ENCODE measurements at regions of chr20 and their contacts with region 1.

Region 1: DNA sequence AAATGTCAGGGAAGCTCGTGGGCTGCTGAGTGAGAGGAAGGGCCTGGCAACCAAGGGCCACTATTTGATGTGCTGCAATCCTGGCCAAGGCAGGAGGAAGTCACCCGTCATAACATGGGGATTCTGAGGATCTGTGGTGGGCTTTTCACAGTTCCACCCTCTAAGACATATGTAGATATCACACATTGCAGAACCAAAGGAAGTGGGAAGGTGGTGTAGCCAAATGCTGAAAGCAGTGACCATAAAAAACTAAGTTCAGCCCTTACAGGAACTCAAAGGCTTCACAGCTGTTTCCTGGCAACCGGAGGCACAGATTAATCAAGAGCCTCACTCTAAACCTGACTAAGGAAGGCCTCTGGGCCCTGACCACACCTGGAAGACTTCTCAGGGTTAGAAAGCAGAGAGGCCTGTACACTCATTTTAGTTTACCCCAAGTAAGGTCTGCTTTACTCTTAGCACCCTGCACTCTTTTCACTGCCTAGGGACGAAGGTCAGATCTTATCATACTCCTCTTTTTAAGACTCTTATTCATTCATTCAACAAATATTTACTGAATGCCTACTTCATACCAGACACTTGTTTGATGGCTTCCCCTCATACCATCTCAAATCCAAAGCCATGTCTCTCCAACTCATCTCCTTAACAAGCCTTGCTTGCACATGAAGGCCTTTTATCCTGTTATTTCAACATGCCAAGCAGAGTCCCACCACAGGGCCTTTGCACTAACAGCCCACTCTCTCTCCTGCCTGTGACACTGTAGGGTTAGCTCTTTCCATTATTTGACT is 2.6 kb downstream of the UBE2V1 start:
- DNase-seq: no peak
- H3K4me3 ChIP-seq: no peak overlapping the region
- H3K27ac ChIP-seq: no peak overlapping the region
- H3K4me1 ChIP-seq: peaks cover 37% of the 10 kb centered on the region
- H3K27me3 ChIP-seq: no peaks in the 10 kb centered on the region
- CTCF ChIP-seq: no peak

Region 2: DNA sequence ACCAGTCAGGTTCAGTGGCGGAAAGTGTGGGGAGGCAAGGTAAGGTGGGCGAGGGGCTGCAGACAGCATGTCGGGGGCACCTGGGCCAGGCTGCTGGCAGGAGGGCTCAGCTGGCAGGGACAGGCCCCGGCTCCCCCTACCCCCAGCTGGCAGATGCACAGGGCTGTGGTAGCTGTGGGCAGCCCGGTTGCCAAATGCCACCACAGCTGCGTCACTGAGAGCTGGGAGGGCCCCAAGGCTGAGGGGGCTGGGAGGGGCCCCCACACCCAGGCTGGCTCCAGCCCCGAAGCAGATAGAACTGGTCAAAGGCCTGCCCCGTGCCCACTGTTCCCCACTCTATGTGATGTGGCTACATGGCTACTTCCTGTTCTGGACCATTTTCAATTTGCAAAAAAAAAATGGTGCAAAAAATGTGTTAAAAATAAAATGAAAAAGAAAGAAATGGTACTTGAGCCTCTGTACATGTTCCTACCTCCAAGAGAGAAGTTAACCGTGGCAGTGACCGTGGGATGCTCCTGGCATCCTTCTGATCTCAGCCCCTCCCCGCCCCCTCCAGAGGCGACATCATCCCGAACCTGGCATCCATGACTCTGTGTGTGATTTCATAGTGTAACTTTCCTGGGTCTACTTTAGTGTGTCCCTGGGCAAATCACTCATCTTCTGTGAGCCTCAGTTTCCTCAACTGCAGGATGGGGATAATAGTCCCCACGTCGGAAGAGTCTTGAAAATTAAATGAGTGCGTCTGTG is 61.7 kb before region 1 on chr20:
- CTCF ChIA-PET with region 1: no interaction called
- POLR2A ChIA-PET with region 1: interaction called, 17 read pairs
- intact Hi-C with region 1: no loop called
- DNase-seq: no peak
- H3K4me3 ChIP-seq: no peak overlapping the region
- H3K27ac ChIP-seq: no peak overlapping the region
- H3K4me1 ChIP-seq: peaks cover 11% of the 10 kb centered on the region
- H3K27me3 ChIP-seq: no peaks in the 10 kb centered on the region
- CTCF ChIP-seq: no peak